ENCODE measurements at regions of chr19 and their contacts with region 1.

Region 1: DNA sequence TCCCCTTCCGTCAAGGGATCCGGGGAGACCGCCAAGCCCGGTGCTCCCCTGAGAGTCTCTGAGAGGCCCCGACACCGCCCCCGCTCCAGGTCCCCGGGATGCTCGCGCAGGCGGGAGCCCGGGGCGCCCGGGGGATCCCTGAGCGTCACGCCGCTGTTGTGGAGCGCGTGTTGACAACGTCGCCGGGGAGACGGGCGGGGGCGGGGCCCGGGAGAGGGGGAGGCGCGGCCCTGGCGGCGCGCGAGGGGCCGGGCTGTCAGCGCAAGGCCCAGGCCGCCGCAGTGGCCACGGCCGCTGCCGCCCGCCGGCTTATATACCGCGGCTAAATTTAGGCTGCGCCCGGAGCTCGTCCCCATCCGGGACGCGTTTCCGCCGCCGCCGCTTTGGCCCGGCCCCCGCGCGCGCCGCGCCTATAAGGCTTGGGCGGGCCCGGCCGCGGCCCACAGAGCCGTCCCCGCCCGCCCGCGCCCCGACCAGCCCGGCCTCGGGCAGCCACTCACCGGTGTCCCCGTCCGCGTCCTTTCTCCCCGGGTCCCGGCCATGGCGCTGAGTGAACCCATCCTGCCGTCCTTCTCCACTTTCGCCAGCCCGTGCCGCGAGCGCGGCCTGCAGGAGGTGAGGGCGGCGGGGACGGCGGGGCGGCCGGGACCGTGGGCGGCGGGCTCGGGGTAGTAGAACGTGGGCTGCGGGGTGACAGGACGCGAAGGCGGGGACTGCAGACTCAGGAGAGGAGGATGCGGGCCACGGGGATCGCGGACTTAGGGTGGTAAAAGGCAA is at the start of gene KLF2:
- H3K4me3 Mint-ChIP-seq: peak within 1 kb of the TSS; percentile 70
- H3K27ac Mint-ChIP-seq: peak within 1 kb of the TSS; percentile 88
- H3K4me1 Mint-ChIP-seq: peaks cover 56% of the 10 kb centered on the region
- H3K27me3 Mint-ChIP-seq: peaks cover 40% of the 10 kb centered on the region

Region 2: GRCh38 chr19:16247353-16248182 is 77.0 kb before region 1 on chr19:
- intact Hi-C with region 1: loop called (anchors 5 kb)
- H3K4me3 Mint-ChIP-seq: no peak overlapping the region
- H3K27ac Mint-ChIP-seq: peak overlapping the region; percentile 57
- H3K4me1 Mint-ChIP-seq: peaks cover 14% of the 10 kb centered on the region
- H3K27me3 Mint-ChIP-seq: peaks cover 6% of the 10 kb centered on the region

Region 3: GRCh38 chr19:16259385-16260159 is 65.0 kb before region 1 on chr19:
- intact Hi-C with region 1: loop called (anchors 5 kb)
- H3K4me3 Mint-ChIP-seq: peak overlapping the region; percentile 10
- H3K27ac Mint-ChIP-seq: peak overlapping the region; percentile 79
- H3K4me1 Mint-ChIP-seq: peaks cover 68% of the 10 kb centered on the region
- H3K27me3 Mint-ChIP-seq: peaks cover 13% of the 10 kb centered on the region

Region 4: DNA sequence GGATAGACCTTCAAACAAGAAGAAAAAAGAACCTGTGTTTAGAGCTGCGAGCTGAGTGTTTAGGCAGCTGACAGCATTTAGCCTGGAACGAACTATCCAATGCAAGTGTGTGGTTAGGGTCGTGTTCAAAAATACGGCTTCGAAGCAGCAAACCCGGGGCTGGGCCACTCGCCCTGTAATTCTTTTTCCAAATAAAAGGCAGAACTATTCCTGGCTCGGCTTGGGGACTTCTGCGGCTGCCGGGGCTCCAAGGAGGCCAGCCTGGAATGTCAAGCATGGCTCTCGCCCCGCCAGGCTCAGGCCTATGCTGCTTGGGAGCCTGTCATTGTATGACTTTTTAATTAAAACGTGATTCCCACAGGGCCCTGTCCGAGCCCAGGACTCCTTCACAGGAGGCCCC is 51.6 kb before region 1 on chr19:
- intact Hi-C with region 1: no loop called
- H3K4me3 Mint-ChIP-seq: no peak overlapping the region
- H3K27ac Mint-ChIP-seq: no peak overlapping the region
- H3K4me1 Mint-ChIP-seq: peaks cover 7% of the 10 kb centered on the region
- H3K27me3 Mint-ChIP-seq: peaks cover 5% of the 10 kb centered on the region

Region 5: GRCh38 chr19:16342002-16342715 is 17.6 kb after region 1 on chr19:
- intact Hi-C with region 1: loop called (anchors 1 kb)
- H3K4me3 Mint-ChIP-seq: peak overlapping the region; percentile 26
- H3K27ac Mint-ChIP-seq: peak overlapping the region; percentile 83
- H3K4me1 Mint-ChIP-seq: peaks cover 50% of the 10 kb centered on the region
- H3K27me3 Mint-ChIP-seq: peaks cover 35% of the 10 kb centered on the region

Region 6: GRCh38 chr19:16366433-16367260 is 42.1 kb after region 1 on chr19:
- intact Hi-C with region 1: loop called (anchors 5 kb)
- H3K4me3 Mint-ChIP-seq: peak overlapping the region; percentile 68
- H3K27ac Mint-ChIP-seq: peak overlapping the region; percentile 89
- H3K4me1 Mint-ChIP-seq: peaks cover 73% of the 10 kb centered on the region
- H3K27me3 Mint-ChIP-seq: peaks cover 39% of the 10 kb centered on the region

Region 7: GRCh38 chr19:16382775-16383543 is 58.4 kb after region 1 on chr19:
- intact Hi-C with region 1: loop called (anchors 5 kb)
- H3K4me3 Mint-ChIP-seq: no peak overlapping the region
- H3K27ac Mint-ChIP-seq: peak overlapping the region; percentile 58
- H3K4me1 Mint-ChIP-seq: peaks cover 17% of the 10 kb centered on the region
- H3K27me3 Mint-ChIP-seq: no peaks in the 10 kb centered on the region